Left cardiac atrium (tissue), 4 donors: ENCODE measurements at regions of chr9 and their contacts with region 1.

Region 1: DNA sequence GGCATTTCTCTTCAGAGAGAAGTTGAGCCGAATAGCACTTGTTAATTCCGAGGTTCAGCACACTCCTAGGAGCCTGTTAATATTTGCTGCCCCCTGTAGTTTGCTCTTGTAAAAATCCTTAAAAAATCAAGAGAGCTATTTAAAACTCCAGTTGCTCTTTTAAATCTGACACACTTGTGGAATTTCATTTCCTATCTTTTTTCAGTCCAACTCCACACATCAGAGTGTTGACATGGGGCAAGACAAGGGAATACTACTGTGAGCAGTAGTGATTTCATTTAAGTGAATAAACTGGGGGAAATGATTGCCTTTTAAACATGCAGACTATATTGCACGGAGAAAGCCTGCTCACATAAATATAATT is 1096.3 kb upstream of the DMAC1 start:
- DNase-seq: no peak
- ATAC-seq: peak; percentile 62 to 82

Region 2: DNA sequence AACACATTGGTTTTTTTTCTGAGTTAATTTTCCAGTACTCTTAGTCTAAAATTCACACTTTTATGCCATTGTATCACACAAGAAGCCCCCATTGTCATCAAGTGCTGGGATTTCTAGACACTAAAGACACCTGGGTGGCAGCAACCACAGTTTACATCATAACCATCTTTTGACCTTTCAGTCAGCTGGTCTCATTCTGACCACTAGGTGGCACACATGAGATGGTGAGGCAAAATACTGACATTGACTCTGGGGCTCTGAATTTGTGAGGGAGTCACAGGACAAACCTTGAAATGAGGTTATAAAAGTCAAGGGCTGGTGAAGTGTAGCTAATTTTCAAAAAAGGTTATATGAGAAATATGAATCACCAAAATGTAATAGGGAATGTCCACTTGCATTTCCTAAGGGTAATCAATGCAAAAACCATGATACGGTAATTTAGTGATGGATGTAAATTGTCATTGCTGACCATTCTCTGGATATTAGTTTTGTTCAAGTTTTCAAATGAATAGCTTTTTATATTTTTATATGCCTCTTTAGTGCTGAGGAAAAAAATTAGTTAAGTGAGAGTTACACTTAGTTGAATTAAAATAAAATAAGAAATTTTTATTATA is 1325.6 kb before region 1 on chr9:
- intact Hi-C with region 1: loop called in 1 of 2 experiments (anchors 2 kb)
- DNase-seq: peak; percentile 27
- ATAC-seq: peak in 1 of 2 donors; percentile 36

Region 3: GRCh38 chr9:7844242-7844641 is 1051.6 kb before region 1 on chr9:
- intact Hi-C with region 1: loop called in 1 of 2 experiments (anchors 10 kb)
- DNase-seq: no peak
- ATAC-seq: peak in 1 of 2 donors; percentile 35

Region 4: DNA sequence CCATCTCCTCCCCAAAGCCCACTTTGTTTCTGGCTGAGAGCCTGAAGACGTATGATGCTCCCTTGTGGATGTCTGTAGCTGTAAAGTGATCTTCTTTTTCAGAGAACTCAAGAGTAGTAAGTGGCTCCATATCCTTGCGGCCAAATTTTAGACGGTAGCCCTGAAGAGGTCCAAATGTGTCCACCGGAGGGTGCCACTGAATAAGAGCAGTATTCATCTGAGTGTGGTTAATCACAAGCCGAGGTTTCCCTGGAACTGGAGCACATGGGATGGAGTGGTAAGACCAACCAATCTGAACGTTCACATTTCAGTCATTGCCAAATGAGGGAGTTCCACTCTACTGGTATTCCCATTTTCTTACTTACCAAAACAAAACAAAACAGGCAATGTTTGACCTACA is 409.7 kb before region 1 on chr9:
- intact Hi-C with region 1: loop called in 1 of 2 experiments (anchors 10 kb)
- DNase-seq: peak; percentile 26
- ATAC-seq: peak; percentile 55 to 72

Region 5: DNA sequence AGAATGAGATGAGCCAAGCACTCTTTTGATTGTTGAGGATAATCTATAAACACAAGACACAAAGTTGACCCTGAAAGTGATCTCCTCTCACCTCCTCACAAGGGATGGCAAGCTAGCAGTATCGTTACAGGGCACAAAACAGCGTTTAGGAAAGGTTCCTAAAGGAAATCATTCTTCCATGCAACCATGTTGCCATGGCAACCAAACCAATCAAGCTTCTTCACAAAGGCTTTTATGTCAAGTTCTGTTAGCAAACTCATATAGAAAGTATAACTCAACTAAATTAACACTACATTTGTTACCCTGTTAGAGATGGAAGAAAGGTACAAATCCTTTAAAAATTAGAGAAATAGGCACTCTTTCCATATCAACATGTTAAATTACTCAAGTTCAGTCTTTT is 79.5 kb before region 1 on chr9:
- intact Hi-C with region 1: no loop called
- DNase-seq: no peak
- ATAC-seq: no peak

Region 6: GRCh38 chr9:8880060-8880459 is 15.8 kb before region 1 on chr9:
- intact Hi-C with region 1: no loop called
- DNase-seq: no peak
- ATAC-seq: no peak